Stomach (tissue), 19 donors: ENCODE measurements at regions of chr20 and their contacts with region 1.

Region 1: DNA sequence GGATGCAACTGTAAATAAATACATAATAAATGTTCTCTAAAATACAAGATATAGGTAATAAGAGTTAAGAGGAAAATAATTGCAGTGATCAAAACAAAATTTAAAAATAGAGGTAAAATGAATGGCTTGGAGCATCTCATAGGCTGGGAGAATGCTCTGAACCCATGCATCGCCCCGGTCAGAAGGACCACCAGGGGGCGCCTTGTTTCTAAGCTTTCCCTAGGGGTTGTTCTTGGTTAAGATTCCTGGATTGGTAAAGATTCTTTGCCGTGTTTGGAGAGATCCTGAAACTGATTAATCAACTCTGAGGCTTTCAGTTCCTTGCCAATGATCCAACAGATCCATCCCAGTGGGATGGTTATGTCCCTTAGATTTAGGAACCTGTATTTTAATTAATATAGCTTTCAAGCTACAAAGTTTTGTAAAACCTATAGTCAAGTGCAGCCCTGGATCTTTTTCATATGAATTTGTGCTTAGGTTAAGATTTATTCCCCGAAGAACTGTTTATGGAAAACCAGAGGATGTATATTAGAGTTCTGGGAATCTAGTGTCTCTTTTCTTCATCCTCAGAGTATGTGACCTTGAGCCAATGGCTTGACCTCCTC is 45.3 kb upstream of the PRELID3B start:
- DNase-seq: peak; percentile 89
- H3K4me3 ChIP-seq: no peak overlapping the region
- H3K27ac ChIP-seq: no peak overlapping the region
- H3K4me1 ChIP-seq: peaks cover 0 to 3% (median 0%) of the 10 kb centered on the region in 4 donors
- H3K27me3 ChIP-seq: peaks cover 0 to 5% (median 0%) of the 10 kb centered on the region in 3 donors
- CTCF ChIP-seq: peak in 5 of 7 experiments; percentile 47 to 93 (median 87)
- EP300 ChIP-seq: no peak
- POLR2A ChIP-seq: no peak

Region 2: DNA sequence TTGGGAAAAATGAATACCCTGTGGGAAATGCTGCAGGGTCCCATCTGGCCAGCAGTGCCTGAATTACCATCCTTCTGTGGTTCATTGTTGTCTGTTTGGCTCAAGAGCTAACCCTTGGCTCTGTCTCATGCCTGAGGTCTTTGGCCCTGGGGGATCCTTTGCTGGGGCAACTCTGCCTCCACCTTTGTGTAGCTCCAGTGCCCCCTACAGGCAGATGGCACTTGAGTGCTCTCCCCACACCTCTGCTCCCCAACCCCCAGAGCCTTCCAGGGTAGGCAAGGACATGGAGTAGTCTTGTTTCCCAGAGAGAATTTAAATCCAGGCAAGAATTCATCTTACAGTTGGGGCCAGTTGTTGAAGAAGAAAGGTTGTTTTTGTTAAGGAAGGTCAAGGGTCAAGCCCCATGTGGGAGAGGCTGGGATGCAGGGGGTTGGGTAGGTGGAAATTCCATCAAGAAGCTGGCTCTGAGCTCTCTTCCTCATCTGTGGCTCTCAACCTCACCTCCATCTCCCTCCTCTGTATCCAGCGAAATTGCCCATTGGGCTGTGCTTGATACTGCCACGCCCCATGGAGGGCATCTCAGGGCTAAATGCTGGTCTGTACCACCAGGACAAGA is 119.9 kb after region 1 on chr20:
- intact Hi-C with region 1: loop called (anchors 5 kb)
- DNase-seq: peak; percentile 66 to 75
- H3K4me3 ChIP-seq: no peak overlapping the region
- H3K27ac ChIP-seq: no peak overlapping the region
- H3K4me1 ChIP-seq: no peaks in the 10 kb centered on the region
- H3K27me3 ChIP-seq: peaks cover 0 to 55% (median 0%) of the 10 kb centered on the region in 3 donors
- CTCF ChIP-seq: peak in 5 of 7 experiments; percentile 5 to 54 (median 40)
- EP300 ChIP-seq: no peak
- POLR2A ChIP-seq: no peak